GM12878 (cell line): ENCODE measurements at regions of chrX and their contacts with region 1.

Region 1: DNA sequence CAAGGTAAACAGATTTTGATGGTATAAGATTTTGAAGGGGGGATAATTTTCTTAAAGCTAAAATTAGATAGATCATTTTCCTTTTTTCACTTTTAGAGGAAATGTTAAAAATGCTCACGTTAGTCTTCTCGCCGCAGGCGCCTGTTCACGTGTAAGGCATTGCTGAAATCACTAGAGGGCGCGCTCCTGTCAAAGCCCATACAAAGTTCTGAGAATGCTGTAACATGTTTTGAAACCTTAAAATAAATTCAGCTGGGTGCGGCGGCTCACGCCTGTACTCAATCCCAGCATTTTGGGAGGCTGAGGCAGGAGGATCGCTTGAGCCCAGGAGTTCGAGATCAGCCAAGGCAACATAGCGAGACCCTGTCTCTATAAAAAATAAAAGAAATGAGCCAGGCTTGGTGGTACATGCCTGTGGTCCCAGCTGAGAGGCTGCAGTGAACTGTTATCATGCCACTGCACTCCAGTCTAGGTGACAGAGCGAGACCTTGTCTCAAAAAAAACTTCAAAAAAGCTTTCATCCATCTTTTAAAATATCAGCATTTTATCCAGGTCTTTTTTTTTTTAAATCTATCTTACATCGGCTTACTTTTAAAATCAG is 138.0 kb downstream of the RBMX2 start:
- DNase-seq: no peak
- ATAC-seq: peak; percentile 85
- H3K4me3 ChIP-seq: no peak overlapping the region
- H3K27ac ChIP-seq: no peak overlapping the region
- H3K4me1 ChIP-seq: no peaks in the 10 kb centered on the region
- H3K27me3 ChIP-seq: no peaks in the 10 kb centered on the region; a peak in 1 of 4 replicates
- CTCF ChIP-seq: peak; percentile 74 to 77 (median 75)
- EP300 ChIP-seq: no peak
- POLR2A ChIP-seq: no peak
- RAD21 ChIP-seq: peak; percentile 67

Region 2: GRCh38 chrX:130339408-130340222 is 200.2 kb before region 1 on chrX and contains the start of gene SLC25A14:
- CTCF ChIA-PET with region 1: no interaction called
- POLR2A ChIA-PET with region 1: no interaction called
- RAD21 ChIA-PET with region 1: no interaction called
- SMC1A ChIA-PET with region 1: no interaction called
- in situ Hi-C with region 1: no loop called
- intact Hi-C with region 1: loop called (anchors 10 kb)
- DNase-seq: peak; percentile 38
- ATAC-seq: peak; percentile 95
- H3K4me3 ChIP-seq: peak within 1 kb of the TSS; percentile 67
- H3K27ac ChIP-seq: peak within 1 kb of the TSS; percentile 60
- H3K4me1 ChIP-seq: no peaks in the 10 kb centered on the region
- H3K27me3 ChIP-seq: no peaks in the 10 kb centered on the region
- CTCF ChIP-seq: no peak
- EP300 ChIP-seq: no peak
- POLR2A ChIP-seq: peak; percentile 71
- RAD21 ChIP-seq: no peak
- polyA plus RNA-seq, gene SLC25A14: 14.5 to 16.7 TPM

Region 3: DNA sequence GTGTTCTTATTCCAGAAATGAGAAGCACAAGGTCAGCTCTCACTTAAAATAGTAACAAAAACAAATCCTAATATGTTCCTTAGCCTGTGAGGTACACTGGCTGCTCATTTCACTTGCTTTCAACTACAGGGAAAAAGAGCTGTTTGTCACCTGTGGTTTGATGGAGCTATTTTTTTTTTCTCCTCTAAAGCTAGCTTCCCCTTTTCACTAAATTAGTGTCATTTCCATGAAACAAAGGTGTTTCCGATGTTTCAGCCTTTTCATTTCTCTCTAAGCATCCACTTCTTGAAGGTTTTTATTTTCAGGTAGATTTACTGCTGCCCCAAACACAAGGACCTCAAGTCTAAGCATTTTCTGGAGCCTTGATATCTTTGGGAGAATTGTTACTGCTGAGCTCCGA is 10.5 kb after region 1 on chrX:
- CTCF ChIA-PET with region 1: interaction called, 20 read pairs
- POLR2A ChIA-PET with region 1: no interaction called
- RAD21 ChIA-PET with region 1: interaction called, 3 read pairs
- SMC1A ChIA-PET with region 1: interaction called, 3 read pairs
- in situ Hi-C with region 1: no loop called
- intact Hi-C with region 1: no loop called
- DNase-seq: no peak
- ATAC-seq: no peak
- H3K4me3 ChIP-seq: no peak overlapping the region
- H3K27ac ChIP-seq: no peak overlapping the region
- H3K4me1 ChIP-seq: no peaks in the 10 kb centered on the region
- H3K27me3 ChIP-seq: no peaks in the 10 kb centered on the region; a peak in 3 of 4 replicates
- CTCF ChIP-seq: no peak
- EP300 ChIP-seq: no peak
- POLR2A ChIP-seq: no peak
- RAD21 ChIP-seq: no peak

Region 4: GRCh38 chrX:130575831-130576389 is 36.1 kb after region 1 on chrX:
- CTCF ChIA-PET with region 1: interaction called, 16 read pairs
- POLR2A ChIA-PET with region 1: no interaction called
- RAD21 ChIA-PET with region 1: interaction called, 3 read pairs
- SMC1A ChIA-PET with region 1: interaction called, 4 read pairs
- in situ Hi-C with region 1: no loop called
- intact Hi-C with region 1: no loop called
- DNase-seq: no peak
- ATAC-seq: peak; percentile 88
- H3K4me3 ChIP-seq: no peak overlapping the region
- H3K27ac ChIP-seq: no peak overlapping the region
- H3K4me1 ChIP-seq: no peaks in the 10 kb centered on the region
- H3K27me3 ChIP-seq: peaks cover 0 to 3% of the 10 kb centered on the region in 2 experiments; a peak in 1 of 4 replicates
- CTCF ChIP-seq: peak; percentile 80 to 92 (median 90)
- EP300 ChIP-seq: no peak
- POLR2A ChIP-seq: no peak
- RAD21 ChIP-seq: peak; percentile 72

Region 5: DNA sequence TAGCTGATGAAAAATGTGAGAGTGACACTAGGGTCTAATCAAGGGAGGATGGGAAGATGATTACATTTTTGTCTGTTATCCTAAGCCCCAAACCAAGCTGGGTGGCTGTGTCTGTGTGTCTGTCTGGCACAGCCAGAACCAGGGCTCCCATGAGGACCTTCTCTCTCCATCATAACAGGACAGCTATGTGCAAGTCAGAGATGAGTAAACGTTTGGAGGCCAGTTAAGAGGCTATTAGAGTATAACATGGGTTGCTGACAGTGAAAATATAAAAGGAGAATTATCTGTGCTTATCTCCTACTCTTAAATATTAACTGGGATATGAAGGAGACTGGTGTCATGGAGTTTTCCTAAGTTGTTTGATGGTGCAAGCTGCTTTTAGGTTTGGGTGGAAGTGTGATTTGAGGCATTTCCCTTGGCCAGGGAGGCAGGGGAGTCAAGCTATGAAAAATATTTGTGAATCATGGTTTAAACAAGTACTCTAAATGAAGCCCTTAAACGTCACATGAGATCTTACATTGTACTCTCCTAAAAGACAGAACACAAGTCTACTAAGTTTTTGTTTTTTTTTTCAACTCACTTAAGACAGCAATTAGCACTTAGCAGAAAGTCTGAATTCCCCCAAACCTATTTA is 207.0 kb after region 1 on chrX:
- CTCF ChIA-PET with region 1: no interaction called
- POLR2A ChIA-PET with region 1: no interaction called
- RAD21 ChIA-PET with region 1: no interaction called
- SMC1A ChIA-PET with region 1: no interaction called
- in situ Hi-C with region 1: no loop called
- intact Hi-C with region 1: no loop called
- DNase-seq: no peak
- ATAC-seq: no peak
- H3K4me3 ChIP-seq: no peak overlapping the region
- H3K27ac ChIP-seq: no peak overlapping the region
- H3K4me1 ChIP-seq: no peaks in the 10 kb centered on the region
- H3K27me3 ChIP-seq: no peaks in the 10 kb centered on the region
- CTCF ChIP-seq: no peak
- EP300 ChIP-seq: no peak
- POLR2A ChIP-seq: no peak
- RAD21 ChIP-seq: no peak